ENCODE measurements at regions of chr20 and their contacts with region 1.

Region 1: DNA sequence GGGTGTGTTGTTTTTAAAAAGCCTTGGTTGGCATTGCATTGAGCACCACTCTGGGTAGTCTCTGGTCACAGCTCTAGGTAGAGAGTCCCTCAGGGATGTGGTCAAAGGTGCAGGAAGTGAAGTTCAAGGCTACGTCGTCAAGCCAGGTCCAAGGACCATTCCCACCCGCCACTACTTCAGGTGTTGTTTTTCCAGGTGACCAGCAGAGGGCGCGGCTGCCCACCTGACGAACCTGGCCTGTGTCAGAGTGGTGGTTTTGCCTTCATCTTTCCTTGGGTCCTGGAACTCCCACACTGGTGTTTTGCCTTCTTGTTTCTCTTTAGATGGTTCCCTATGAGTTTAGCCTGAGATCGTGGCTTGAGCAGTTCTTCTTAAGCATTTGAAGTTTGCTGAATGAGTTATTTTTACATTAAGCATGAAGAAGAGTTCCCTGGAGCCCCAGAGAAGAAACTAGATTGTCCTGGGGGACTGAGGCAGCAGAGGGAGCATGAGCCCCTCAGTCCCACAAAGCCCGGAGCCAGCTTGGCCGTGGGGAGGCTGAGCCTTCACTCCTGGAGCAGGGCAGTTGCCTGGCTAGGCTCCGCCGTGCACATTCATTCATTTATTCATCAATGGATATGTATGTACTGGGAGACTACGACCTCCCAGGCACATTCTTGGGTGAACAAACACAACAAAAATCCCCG is 5.6 kb upstream of the PHACTR3 start:
- DNase-seq: no peak
- H3K4me3 ChIP-seq: no peak overlapping the region
- H3K27ac ChIP-seq: no peak overlapping the region
- H3K4me1 ChIP-seq: peaks cover 0 to under 1% (median 0%) of the 10 kb centered on the region in 3 donors
- H3K27me3 ChIP-seq: peaks cover 0 to 73% (median 4%) of the 10 kb centered on the region in 4 donors
- CTCF ChIP-seq: peak; percentile 38 to 63 (median 57)
- POLR2A ChIP-seq: no peak

Region 2: DNA sequence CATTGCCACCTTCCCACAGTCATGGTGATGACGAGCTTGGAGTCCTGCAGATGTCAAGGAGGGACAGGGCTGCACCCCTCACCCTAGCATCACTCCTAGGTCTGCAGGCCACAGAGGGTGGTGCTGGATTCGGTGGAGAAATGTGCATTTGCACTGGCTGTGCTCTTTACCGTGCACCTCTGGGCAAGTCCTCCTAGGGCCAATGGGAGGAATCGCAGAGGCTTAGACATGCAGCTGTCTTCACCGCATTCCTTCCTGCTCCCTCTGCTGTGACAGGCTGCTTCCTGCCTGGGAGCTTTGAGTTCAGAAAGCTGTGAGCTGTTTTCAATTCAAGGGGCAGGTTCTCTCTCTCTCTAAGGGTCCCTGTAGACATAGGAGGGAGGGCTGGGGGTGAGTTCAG is 213.3 kb before region 1 on chr20:
- intact Hi-C with region 1: no loop called
- DNase-seq: no peak
- H3K4me3 ChIP-seq: no peak overlapping the region
- H3K27ac ChIP-seq: peak overlapping the region in 3 of 4 donors; percentile 72 to 87 (median 75)
- H3K4me1 ChIP-seq: peaks cover 0 to 79% (median 22%) of the 10 kb centered on the region in 3 donors
- H3K27me3 ChIP-seq: peaks cover 0 to 66% (median 0%) of the 10 kb centered on the region in 4 donors
- CTCF ChIP-seq: peak in 2 of 6 experiments; percentile 25 to 27
- POLR2A ChIP-seq: no peak

Region 3: GRCh38 chr20:59696476-59696875 is 97.7 kb after region 1 on chr20:
- intact Hi-C with region 1: no loop called
- DNase-seq: no peak
- H3K4me3 ChIP-seq: no peak overlapping the region
- H3K27ac ChIP-seq: no peak overlapping the region
- H3K4me1 ChIP-seq: no peaks in the 10 kb centered on the region
- H3K27me3 ChIP-seq: peaks cover 0 to 4% (median 0%) of the 10 kb centered on the region in 4 donors
- CTCF ChIP-seq: no peak
- POLR2A ChIP-seq: no peak

Region 4: GRCh38 chr20:59751056-59751688 is 152.4 kb after region 1 on chr20:
- intact Hi-C with region 1: loop called (anchors 5 kb)
- DNase-seq: no peak
- H3K4me3 ChIP-seq: no peak overlapping the region
- H3K27ac ChIP-seq: no peak overlapping the region
- H3K4me1 ChIP-seq: peaks cover 0 to 42% (median 2%) of the 10 kb centered on the region in 3 donors
- H3K27me3 ChIP-seq: peaks cover 0 to 65% (median 0%) of the 10 kb centered on the region in 4 donors
- CTCF ChIP-seq: peak in 5 of 6 experiments; percentile 48 to 74 (median 53)
- POLR2A ChIP-seq: no peak

Region 5: GRCh38 chr20:59912609-59913008 is 313.8 kb after region 1 on chr20:
- intact Hi-C with region 1: no loop called
- DNase-seq: no peak
- H3K4me3 ChIP-seq: no peak overlapping the region
- H3K27ac ChIP-seq: no peak overlapping the region
- H3K4me1 ChIP-seq: no peaks in the 10 kb centered on the region
- H3K27me3 ChIP-seq: no peaks in the 10 kb centered on the region
- CTCF ChIP-seq: no peak
- POLR2A ChIP-seq: no peak